Tibial artery (tissue), 4 donors: ENCODE measurements at regions of chr6 and their contacts with region 1.

Region 1: DNA sequence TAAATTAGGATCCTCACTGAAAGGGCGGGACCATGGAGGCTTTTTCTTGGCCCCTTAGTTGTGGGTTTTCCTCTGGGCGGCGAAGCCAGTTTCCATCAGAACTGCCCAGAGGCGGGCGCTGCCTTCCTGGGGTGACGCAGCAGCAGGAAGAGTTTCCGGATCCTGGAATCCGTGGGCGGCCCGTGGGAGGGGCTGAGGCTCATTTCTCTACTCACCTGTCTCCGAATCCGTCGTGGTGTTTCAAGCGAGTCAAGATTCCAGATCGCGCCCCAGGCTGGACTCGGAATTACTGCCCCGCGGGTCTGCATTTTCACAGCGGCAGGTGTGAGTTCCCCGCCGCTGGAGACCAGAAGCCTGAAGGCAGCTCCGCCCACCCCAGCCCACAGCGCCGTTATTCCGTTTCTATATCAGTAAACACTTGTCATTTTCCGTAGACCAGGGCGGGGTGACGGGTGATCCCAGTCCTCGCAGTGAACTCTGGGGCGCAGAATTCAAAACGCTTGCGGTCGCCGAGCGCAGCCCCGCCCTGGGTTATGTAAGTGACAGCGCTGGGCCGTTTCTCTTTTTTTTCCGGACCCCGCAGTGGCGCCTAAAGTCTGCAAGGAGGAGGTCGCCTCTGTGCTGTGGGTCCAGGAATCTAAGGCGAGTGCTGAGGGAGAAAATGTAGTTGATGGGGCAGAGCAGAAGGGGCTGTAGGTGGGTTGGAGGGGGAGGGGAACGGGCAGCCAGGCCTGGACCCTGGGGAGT is 27.2 kb upstream of the POU5F1 start:
- DNase-seq: peak; percentile 92 to 95
- H3K4me3 ChIP-seq: peak overlapping the region; percentile 61 to 81
- H3K27ac ChIP-seq: peak overlapping the region; percentile 81 to 95
- H3K4me1 ChIP-seq: peaks cover 0 to 28% (median 12%) of the 10 kb centered on the region in 4 donors
- H3K27me3 ChIP-seq: no peaks in the 10 kb centered on the region
- CTCF ChIP-seq: peak in 1 of 2 experiments; percentile 20

Region 2: GRCh38 chr6:30686908-30687658 is 510.6 kb before region 1 on chr6:
- intact Hi-C with region 1: no loop called
- DNase-seq: peak; percentile 96 to 99
- H3K4me3 ChIP-seq: peak overlapping the region; percentile 64 to 90
- H3K27ac ChIP-seq: peak overlapping the region; percentile 94 to 100
- H3K4me1 ChIP-seq: peaks cover 0 to 82% (median 51%) of the 10 kb centered on the region in 4 donors
- H3K27me3 ChIP-seq: no peaks in the 10 kb centered on the region
- CTCF ChIP-seq: no peak

Region 3: DNA sequence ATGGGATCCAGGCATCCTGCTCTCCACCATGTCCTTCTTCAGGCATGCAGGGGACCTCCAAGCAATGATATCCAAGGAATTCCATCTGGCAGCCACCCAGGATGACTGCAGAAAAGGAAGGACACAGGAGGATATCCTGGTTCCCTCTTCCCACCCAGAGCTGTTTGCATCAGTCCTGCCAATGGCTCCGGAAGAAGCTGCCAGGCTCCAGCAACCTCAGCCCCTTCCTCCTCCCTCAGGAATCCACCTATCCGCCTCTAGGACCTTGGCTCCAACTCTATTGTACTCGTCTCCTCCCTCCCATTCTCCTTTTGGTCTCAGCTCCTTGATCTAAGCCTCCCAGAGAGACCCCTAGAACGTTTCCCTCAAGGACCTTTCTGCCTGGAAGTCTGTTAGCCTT is 58.1 kb before region 1 on chr6:
- intact Hi-C with region 1: loop called (anchors 5 kb)
- DNase-seq: no peak
- H3K4me3 ChIP-seq: no peak overlapping the region
- H3K27ac ChIP-seq: no peak overlapping the region
- H3K4me1 ChIP-seq: peaks cover 0 to 15% (median 4%) of the 10 kb centered on the region in 4 donors
- H3K27me3 ChIP-seq: peaks cover 0 to 10% of the 10 kb centered on the region in 2 donors
- CTCF ChIP-seq: no peak

Region 4: DNA sequence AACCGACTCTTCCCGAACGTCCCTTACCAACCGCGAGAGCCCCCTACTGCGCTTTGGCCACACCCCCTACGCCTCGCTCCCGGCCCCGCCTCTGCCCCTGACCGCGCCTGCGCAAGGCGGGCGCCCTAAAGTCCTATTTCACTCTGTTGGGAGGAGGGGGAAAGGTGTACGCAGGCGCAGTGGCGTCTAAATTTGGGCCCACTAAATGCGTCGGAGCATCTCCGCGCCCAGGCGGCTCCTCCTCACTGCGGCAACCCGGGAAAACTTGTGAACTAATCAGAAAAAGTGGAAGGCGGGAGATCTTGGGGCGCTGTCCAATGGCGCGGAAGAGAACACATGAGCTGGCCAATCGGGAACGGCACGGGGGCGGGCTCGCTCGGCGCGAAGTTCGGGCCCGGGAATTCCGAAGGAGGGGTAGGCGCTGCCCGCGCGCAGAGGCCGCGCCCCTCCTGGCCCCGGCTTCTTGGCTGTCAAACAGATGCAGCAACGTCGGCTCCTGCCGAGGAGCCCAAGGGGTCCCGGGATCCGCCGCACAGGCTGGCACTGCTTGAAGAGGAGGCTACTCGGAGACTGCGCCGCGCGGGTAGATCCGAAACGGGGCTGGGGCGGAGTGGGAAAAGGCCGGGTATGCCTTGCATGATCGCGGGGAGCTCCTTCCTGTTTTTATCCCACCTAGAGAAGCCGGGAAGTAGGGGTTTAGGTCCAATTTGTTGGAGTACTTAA is 39.4 kb before region 1 on chr6 and contains the start of gene TCF19:
- intact Hi-C with region 1: loop called (anchors 5 kb)
- DNase-seq: peak; percentile 99 to 100
- H3K4me3 ChIP-seq: peak within 1 kb of the TSS; percentile 70 to 78
- H3K27ac ChIP-seq: peak within 1 kb of the TSS; percentile 78 to 91
- H3K4me1 ChIP-seq: peaks cover 0 to 23% (median 18%) of the 10 kb centered on the region in 4 donors
- H3K27me3 ChIP-seq: no peaks in the 10 kb centered on the region
- CTCF ChIP-seq: no peak

Region 5: GRCh38 chr6:31271641-31272357 is 74.1 kb after region 1 on chr6 and contains the start of gene HLA-C:
- intact Hi-C with region 1: loop called (anchors 5 kb)
- DNase-seq: peak; percentile 93 to 96
- H3K4me3 ChIP-seq: peak within 1 kb of the TSS; percentile 86 to 94
- H3K27ac ChIP-seq: peak within 1 kb of the TSS; percentile 91 to 100
- H3K4me1 ChIP-seq: peaks cover 0 to 19% (median 0%) of the 10 kb centered on the region in 4 donors
- H3K27me3 ChIP-seq: no peaks in the 10 kb centered on the region
- CTCF ChIP-seq: no peak

Region 6: GRCh38 chr6:31366693-31367470 is 169.2 kb after region 1 on chr6:
- intact Hi-C with region 1: loop called (anchors 5 kb)
- DNase-seq: peak; percentile 70 to 88
- H3K4me3 ChIP-seq: peak overlapping the region in 1 of 2 donors; percentile 39
- H3K27ac ChIP-seq: no peak overlapping the region
- H3K4me1 ChIP-seq: peaks cover 0 to 5% (median 2%) of the 10 kb centered on the region in 4 donors
- H3K27me3 ChIP-seq: peaks cover 0 to 40% of the 10 kb centered on the region in 2 donors
- CTCF ChIP-seq: peak; percentile 92 to 94

Region 7: DNA sequence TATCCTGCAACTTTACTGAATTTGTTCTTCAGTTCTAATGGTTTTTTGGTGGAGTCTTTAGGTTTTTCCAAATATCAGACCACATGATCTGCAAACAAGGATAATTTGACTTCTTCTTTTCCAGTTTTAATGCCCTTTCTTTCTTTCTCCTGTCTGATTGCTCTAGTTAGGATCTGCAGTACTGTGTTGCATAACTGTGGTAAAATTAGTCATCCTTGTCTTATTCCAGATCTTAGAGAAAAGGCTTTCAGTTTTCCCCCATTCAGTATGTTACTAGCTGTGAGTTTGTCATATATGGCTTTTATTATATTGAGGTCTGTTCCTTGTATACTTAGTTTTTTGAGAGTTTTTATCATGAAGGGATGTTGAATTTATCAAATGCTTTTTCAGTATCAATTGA is 210.0 kb after region 1 on chr6:
- intact Hi-C with region 1: no loop called
- DNase-seq: no peak
- H3K4me3 ChIP-seq: no peak overlapping the region
- H3K27ac ChIP-seq: no peak overlapping the region
- H3K4me1 ChIP-seq: peaks cover 0 to 72% (median 41%) of the 10 kb centered on the region in 4 donors
- H3K27me3 ChIP-seq: no peaks in the 10 kb centered on the region
- CTCF ChIP-seq: no peak

Region 8: DNA sequence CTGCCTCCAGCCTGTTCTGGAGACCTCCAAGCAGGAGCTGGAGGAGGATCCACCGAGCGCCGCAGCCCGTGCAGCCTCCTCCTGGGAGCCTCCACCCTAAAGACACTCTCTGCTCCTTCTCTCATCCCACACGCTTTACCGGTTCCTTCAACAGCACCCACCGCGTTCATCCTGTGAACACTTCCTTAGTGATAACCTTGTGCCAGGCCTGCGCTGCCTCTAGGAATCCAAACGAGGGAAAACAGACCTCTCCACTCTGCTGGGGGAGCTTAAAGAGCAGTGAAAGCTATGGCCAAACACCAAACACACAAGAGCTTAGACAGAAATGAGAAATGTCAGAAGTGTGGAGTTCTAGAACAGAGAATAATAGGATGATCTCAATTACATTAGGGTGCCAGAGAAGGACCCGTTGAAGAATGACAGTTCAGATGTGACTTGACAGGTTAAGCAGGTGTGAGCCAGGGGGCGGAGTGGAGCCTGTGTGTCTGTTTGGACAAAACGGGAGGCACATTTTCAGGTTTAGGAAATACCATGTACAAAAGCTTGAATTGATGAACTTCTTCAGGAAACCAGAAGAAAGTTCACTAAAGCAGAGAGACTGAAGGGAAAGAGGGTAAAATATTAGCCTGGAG is 1360.8 kb after region 1 on chr6:
- intact Hi-C with region 1: no loop called
- DNase-seq: no peak
- H3K4me3 ChIP-seq: no peak overlapping the region
- H3K27ac ChIP-seq: no peak overlapping the region
- H3K4me1 ChIP-seq: no peaks in the 10 kb centered on the region
- H3K27me3 ChIP-seq: no peaks in the 10 kb centered on the region
- CTCF ChIP-seq: no peak